Left lung (tissue), 14 donors: ENCODE measurements at regions of chr7 and their contacts with region 1.

Region 1: GRCh38 chr7:149670288-149670687 is 103.1 kb downstream of the ZNF467 start:
- DNase-seq: peak in 1 of 4 donors; percentile 76
- ATAC-seq: no peak
- H3K4me3 ChIP-seq: no peak overlapping the region
- H3K27ac ChIP-seq: no peak overlapping the region
- H3K4me1 ChIP-seq: no peaks in the 10 kb centered on the region
- H3K27me3 ChIP-seq: no peaks in the 10 kb centered on the region
- CTCF ChIP-seq: no peak

Region 2: GRCh38 chr7:149050941-149051340 is 619.3 kb before region 1 on chr7:
- intact Hi-C with region 1: no loop called
- DNase-seq: no peak
- ATAC-seq: no peak
- H3K4me3 ChIP-seq: no peak overlapping the region
- H3K27ac ChIP-seq: no peak overlapping the region
- H3K4me1 ChIP-seq: no peaks in the 10 kb centered on the region
- H3K27me3 ChIP-seq: no peaks in the 10 kb centered on the region
- CTCF ChIP-seq: no peak

Region 3: DNA sequence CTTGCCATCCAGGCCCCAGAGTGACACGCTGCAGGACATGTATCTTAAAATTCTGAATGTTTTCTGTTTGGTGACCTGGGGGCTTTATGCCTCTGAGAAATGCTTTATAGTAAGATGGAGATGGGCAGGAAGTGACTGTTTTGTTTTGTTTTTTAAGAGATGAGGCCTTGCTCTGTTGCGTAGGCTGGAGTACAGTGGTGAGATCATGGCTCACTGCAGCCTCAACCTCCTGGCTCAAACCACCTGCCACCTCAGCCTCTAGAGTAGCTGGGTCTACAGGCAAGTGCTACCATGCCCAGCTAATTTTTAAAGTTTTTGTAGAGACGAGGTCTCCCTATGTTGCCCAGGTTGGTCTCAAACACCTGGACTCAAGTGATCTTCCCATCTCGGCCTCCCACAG is 230.1 kb before region 1 on chr7:
- intact Hi-C with region 1: no loop called
- DNase-seq: no peak
- ATAC-seq: no peak
- H3K4me3 ChIP-seq: no peak overlapping the region
- H3K27ac ChIP-seq: no peak overlapping the region
- H3K4me1 ChIP-seq: no peaks in the 10 kb centered on the region
- H3K27me3 ChIP-seq: no peaks in the 10 kb centered on the region
- CTCF ChIP-seq: no peak

Region 4: DNA sequence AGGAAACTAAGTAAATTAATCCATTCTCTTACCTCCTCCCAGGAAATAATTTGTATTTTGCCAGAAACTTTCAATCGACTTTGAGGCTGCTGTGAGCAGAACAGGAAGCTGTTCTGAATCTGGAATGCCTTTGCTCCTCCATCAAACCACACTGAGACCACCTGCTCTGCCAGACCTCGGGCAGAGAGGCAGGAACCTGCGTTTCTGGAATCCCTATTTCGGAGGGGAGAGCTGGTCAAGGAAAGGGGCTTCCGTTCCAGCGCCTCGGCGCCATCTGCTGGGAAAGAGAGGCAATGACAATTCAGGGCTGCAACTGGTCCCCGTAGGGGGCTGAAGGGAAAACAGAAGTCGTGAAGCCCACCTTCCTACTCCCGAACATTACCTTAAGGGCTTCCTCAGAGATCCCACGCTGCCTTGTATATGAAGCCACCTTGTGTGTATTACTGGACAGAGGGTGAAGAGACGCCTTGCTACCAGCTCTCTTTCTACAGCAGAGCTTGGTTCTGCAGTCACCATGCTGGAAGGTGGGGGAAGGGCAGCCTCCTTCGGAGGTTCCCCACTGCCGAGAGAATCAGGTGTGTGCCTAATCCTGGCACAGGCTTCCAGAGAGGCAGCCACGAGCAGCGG is 71.9 kb after region 1 on chr7:
- intact Hi-C with region 1: loop called in 1 of 2 experiments (anchors 10 kb)
- DNase-seq: peak; percentile 62 to 92 (median 76)
- ATAC-seq: peak; percentile 94
- H3K4me3 ChIP-seq: peak overlapping the region; percentile 14 to 19
- H3K27ac ChIP-seq: no peak overlapping the region
- H3K4me1 ChIP-seq: peaks cover 9 to 11% of the 10 kb centered on the region in 2 donors
- H3K27me3 ChIP-seq: peaks cover 0 to 12% of the 10 kb centered on the region in 2 donors
- CTCF ChIP-seq: peak; percentile 84 to 86

Region 5: DNA sequence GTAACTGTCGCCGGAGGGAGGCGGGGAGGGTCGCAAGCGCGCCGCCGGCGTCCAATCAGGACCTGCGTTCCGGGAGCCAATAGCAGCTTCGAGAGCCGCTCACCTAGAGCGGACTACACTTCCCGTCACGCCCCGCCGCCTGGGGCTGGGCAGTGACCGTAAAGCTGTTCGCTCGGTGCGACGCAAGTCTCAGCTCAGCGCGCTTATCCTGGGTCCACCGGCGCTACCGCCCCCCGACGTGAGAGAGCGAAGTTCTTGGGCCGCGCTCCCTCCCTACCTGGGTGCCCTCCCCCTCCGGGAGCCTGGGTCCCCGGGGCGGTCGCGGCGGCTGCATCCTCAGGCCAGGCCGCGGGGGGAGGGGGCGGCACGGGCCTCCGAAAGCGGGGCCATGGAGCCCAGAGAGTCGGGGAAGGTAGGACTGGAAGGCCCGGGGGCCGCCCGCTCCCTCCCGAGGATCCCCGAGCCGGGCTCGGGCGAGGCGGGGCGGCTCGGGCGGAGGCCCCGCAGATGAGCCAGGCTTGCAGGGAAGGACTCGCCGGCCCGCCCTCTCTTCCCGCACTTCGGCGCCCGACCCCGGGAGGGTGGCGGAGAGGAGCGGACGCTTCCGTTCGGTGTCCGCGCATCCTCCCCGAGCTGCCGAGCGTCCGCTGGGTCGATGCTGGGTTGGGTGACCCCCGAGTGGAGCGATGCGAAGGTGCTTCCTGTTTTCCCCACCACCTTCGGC is 168.1 kb after region 1 on chr7 and contains the start of gene ZNF862:
- intact Hi-C with region 1: no loop called
- DNase-seq: peak; percentile 94 to 99 (median 99)
- ATAC-seq: peak; percentile 99
- H3K4me3 ChIP-seq: peak within 1 kb of the TSS; percentile 68 to 89
- H3K27ac ChIP-seq: peak within 1 kb of the TSS; percentile 85 to 86
- H3K4me1 ChIP-seq: peaks cover 7 to 20% of the 10 kb centered on the region in 2 donors
- H3K27me3 ChIP-seq: no peaks in the 10 kb centered on the region
- CTCF ChIP-seq: no peak
- polyA plus RNA-seq, gene ZNF862: 19.2 to 27.8 (median 25.0) TPM